ENCODE measurements at regions of chr14 and their contacts with region 1.

Region 1: GRCh38 chr14:99266181-99267178 is 5.5 kb downstream of the BCL11B start:
- DNase-seq: peak; percentile 79 to 93 (median 89)
- ATAC-seq: peak; percentile 56
- H3K4me3 ChIP-seq: peak overlapping the region; percentile 90
- H3K4me3 Mint-ChIP-seq: peak overlapping the region; percentile 92 to 100 (median 94)
- H3K27ac ChIP-seq: peak overlapping the region; percentile 98
- H3K27ac Mint-ChIP-seq: peak overlapping the region; percentile 99 to 100 (median 100)
- H3K4me1 ChIP-seq: peaks cover 16 to 39% of the 10 kb centered on the region in 2 donors
- H3K4me1 Mint-ChIP-seq: peaks cover 43 to 66% (median 54%) of the 10 kb centered on the region in 7 donors
- H3K27me3 ChIP-seq: no peaks in the 10 kb centered on the region
- H3K27me3 Mint-ChIP-seq: peaks cover 0 to 10% (median 0%) of the 10 kb centered on the region in 5 donors

Region 2: GRCh38 chr14:98173305-98173704 is 1093.2 kb before region 1 on chr14:
- CTCF ChIA-PET with region 1: no interaction called
- POLR2A ChIA-PET with region 1: interaction called, 15 read pairs
- intact Hi-C with region 1: no loop called
- DNase-seq: peak in 7 of 9 donors; percentile 71 to 84 (median 82)
- ATAC-seq: peak; percentile 78
- H3K4me3 ChIP-seq: peak overlapping the region; percentile 33
- H3K4me3 Mint-ChIP-seq: peak overlapping the region; percentile 74 to 90 (median 84)
- H3K27ac ChIP-seq: peak overlapping the region; percentile 81
- H3K27ac Mint-ChIP-seq: peak overlapping the region; percentile 89 to 100 (median 97)
- H3K4me1 ChIP-seq: peaks cover 100% of the 10 kb centered on the region in 2 donors
- H3K4me1 Mint-ChIP-seq: peaks cover 59 to 100% (median 99%) of the 10 kb centered on the region in 7 donors
- H3K27me3 ChIP-seq: no peaks in the 10 kb centered on the region
- H3K27me3 Mint-ChIP-seq: no peaks in the 10 kb centered on the region

Region 3: DNA sequence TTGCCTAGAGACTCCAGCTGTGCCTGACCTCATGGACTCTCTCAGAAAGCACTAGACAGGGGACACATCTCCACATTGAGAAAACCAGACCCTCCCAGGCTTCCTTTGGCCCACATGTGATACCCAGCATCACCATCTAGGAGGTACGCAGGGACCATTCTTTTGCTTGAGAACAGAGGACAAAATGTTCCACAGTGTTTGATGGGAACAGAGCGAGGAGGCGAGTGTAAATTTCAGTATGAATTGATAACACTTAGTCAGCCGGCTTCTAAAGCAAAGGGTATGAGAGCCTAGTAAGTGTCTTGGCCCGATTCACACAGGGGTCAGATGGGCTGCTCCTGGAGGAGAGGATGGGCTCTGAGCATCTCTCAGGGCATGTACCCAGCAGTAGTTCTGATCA is 1046.8 kb before region 1 on chr14:
- CTCF ChIA-PET with region 1: interaction called, 4 read pairs
- POLR2A ChIA-PET with region 1: interaction called, 10 read pairs
- intact Hi-C with region 1: no loop called
- DNase-seq: no peak
- ATAC-seq: no peak
- H3K4me3 ChIP-seq: no peak overlapping the region
- H3K4me3 Mint-ChIP-seq: peak overlapping the region in 4 of 10 donors; percentile 2 to 49 (median 33)
- H3K27ac ChIP-seq: no peak overlapping the region
- H3K27ac Mint-ChIP-seq: peak overlapping the region in 4 of 9 donors; percentile 60 to 83 (median 71)
- H3K4me1 ChIP-seq: peaks cover 32 to 76% of the 10 kb centered on the region in 2 donors
- H3K4me1 Mint-ChIP-seq: peaks cover 26 to 49% (median 29%) of the 10 kb centered on the region in 7 donors
- H3K27me3 ChIP-seq: no peaks in the 10 kb centered on the region
- H3K27me3 Mint-ChIP-seq: no peaks in the 10 kb centered on the region

Region 4: DNA sequence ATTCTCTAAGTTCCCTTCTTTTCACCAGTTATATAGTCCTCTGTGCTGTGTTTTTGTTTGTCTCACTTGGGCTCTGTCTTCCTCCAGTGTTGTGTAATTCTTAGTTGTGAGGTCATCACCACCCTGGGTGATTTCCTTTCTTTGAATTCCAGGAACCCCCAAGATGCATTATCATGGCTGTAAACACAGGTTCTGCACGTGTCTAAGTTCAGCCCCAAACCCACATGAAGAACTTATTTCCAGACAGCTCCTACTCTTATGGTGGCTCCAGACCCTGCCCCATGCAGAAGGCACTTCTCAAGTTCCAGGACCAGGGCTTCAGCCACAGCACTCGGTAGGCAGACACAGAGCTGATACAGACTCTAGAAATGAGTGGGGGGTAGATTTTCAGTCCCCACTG is 555.0 kb before region 1 on chr14:
- CTCF ChIA-PET with region 1: no interaction called
- POLR2A ChIA-PET with region 1: no interaction called
- intact Hi-C with region 1: loop called (anchors 5 to 10 kb)
- DNase-seq: peak in 8 of 9 donors; percentile 3 to 44 (median 17)
- ATAC-seq: peak; percentile 65
- H3K4me3 ChIP-seq: no peak overlapping the region
- H3K4me3 Mint-ChIP-seq: peak overlapping the region in 5 of 10 donors; percentile 11 to 67 (median 16)
- H3K27ac ChIP-seq: no peak overlapping the region
- H3K27ac Mint-ChIP-seq: peak overlapping the region; percentile 10 to 91 (median 71)
- H3K4me1 ChIP-seq: peaks cover 0 to 11% of the 10 kb centered on the region in 2 donors
- H3K4me1 Mint-ChIP-seq: peaks cover 12 to 46% (median 27%) of the 10 kb centered on the region in 7 donors
- H3K27me3 ChIP-seq: no peaks in the 10 kb centered on the region
- H3K27me3 Mint-ChIP-seq: peaks cover 0 to 6% (median 0%) of the 10 kb centered on the region in 5 donors

Region 5: DNA sequence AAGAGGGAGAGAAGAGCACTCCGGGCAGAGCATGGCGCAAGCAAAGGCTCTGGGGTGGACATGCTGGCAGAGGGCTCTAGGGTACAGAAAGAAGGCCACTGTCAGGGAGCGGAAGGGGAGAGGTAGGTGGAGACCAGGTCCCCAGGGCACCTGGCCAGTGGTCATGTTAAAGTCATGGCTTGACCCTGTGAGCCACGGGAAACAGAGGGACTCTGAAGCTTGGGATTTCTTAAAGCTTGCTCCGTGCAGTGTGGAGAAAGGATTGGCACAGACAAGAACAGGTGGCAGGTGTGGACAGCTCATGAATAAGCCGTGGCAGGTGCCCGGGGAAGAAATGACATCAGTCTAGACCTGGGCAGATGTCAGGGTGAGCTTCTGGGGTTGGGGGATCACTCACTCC is 408.3 kb before region 1 on chr14:
- CTCF ChIA-PET with region 1: no interaction called
- POLR2A ChIA-PET with region 1: no interaction called
- intact Hi-C with region 1: no loop called
- DNase-seq: no peak
- ATAC-seq: no peak
- H3K4me3 ChIP-seq: no peak overlapping the region
- H3K4me3 Mint-ChIP-seq: no peak overlapping the region
- H3K27ac ChIP-seq: no peak overlapping the region
- H3K27ac Mint-ChIP-seq: peak overlapping the region in 1 of 9 donors; percentile 28
- H3K4me1 ChIP-seq: no peaks in the 10 kb centered on the region
- H3K4me1 Mint-ChIP-seq: peaks cover 0 to 14% (median 0%) of the 10 kb centered on the region in 7 donors
- H3K27me3 ChIP-seq: no peaks in the 10 kb centered on the region
- H3K27me3 Mint-ChIP-seq: peaks cover 0 to 19% (median 5%) of the 10 kb centered on the region in 5 donors

Region 6: DNA sequence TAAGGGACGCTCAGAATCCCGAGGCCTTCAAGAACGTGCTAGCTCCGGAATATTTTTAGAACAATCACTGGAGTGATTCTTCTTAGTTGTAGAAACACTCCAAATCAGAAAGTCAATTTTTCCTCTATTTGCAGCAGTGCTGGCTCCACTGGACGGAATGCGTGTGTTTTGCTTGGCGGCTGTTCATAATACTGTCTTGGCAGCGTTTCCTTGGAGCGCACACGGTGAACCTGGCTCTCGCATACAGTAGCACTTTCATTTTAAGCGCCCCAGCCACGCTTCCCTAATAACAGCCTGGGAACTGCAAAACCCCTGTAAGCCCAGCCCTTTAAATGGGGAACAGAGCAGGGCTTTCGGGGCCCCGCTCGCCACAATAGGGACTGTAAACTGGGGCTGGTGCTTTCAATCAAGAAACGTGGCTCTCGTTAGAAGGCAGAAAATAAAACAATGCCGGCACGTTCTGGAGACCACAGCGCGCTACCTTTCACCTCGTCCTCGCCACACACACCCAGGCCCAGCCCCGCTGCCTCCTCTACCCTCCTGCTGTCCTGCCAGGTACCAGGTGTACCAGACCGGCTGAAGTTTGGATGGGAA is 74.4 kb before region 1 on chr14:
- CTCF ChIA-PET with region 1: interaction called, 10 read pairs
- POLR2A ChIA-PET with region 1: interaction called, 396 read pairs
- intact Hi-C with region 1: loop called (anchors 1 kb)
- DNase-seq: peak in 3 of 9 donors; percentile 45 to 64 (median 49)
- ATAC-seq: peak; percentile 28
- H3K4me3 ChIP-seq: peak overlapping the region; percentile 61
- H3K4me3 Mint-ChIP-seq: peak overlapping the region; percentile 85 to 94 (median 90)
- H3K27ac ChIP-seq: peak overlapping the region; percentile 85
- H3K27ac Mint-ChIP-seq: peak overlapping the region; percentile 93 to 100 (median 98)
- H3K4me1 ChIP-seq: peaks cover 84 to 85% of the 10 kb centered on the region in 2 donors
- H3K4me1 Mint-ChIP-seq: peaks cover 55 to 97% (median 93%) of the 10 kb centered on the region in 7 donors
- H3K27me3 ChIP-seq: no peaks in the 10 kb centered on the region
- H3K27me3 Mint-ChIP-seq: no peaks in the 10 kb centered on the region

Region 7: DNA sequence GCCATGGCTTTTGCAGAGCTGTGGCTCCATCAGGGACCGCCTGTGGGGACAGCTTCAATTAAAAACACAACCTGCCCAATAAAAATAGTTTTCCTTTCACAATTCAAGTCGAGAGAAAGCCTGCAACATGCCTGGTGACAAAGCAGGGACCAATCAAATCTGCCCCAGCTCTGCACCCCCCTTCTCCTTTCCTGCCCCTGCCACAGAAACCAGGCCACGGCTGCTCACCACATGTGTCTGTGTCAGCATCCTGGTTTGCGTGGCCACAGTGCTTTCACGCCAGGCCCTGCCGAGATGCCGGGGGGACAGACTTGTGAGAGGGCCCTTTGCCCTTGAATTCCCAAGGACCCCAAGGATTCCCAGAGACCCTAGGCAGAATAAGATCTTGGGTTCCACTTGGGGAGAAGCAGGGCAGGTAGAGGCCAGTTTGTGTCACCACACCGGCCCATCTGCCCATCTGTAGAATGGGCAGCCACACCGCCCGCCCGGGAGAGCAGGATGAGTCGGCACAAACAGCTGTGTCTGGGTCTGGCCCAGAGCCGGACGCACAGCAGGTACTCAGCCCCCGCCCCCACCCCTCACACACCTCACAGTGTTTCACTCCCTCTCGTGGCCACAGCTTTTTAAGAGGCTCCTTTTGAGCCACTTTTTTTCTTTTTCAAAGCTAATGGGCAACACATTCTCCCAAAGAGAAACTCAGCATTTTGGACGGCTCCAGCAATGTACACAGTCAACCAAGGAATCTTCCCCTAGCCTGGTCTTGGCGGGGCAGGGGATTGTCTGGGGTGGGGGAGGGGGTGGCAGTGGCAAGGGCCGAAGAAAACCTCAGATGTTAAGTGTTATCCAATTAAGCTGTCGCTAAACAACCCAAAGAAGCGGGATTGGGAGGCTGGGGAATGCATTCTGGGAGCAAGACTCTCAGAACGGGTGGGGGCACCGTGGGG is 36.0 kb before region 1 on chr14:
- CTCF ChIA-PET with region 1: interaction called, 16 read pairs
- POLR2A ChIA-PET with region 1: interaction called, 1,374 read pairs
- intact Hi-C with region 1: loop called (anchors 1 kb)
- DNase-seq: peak; percentile 54 to 91 (median 84)
- ATAC-seq: peak; percentile 82
- H3K4me3 ChIP-seq: peak overlapping the region; percentile 27
- H3K4me3 Mint-ChIP-seq: peak overlapping the region; percentile 79 to 94 (median 86)
- H3K27ac ChIP-seq: peak overlapping the region; percentile 98
- H3K27ac Mint-ChIP-seq: peak overlapping the region; percentile 94 to 100 (median 99)
- H3K4me1 ChIP-seq: peaks cover 94 to 96% of the 10 kb centered on the region in 2 donors
- H3K4me1 Mint-ChIP-seq: peaks cover 65 to 96% (median 92%) of the 10 kb centered on the region in 7 donors
- H3K27me3 ChIP-seq: no peaks in the 10 kb centered on the region
- H3K27me3 Mint-ChIP-seq: no peaks in the 10 kb centered on the region

Region 8: DNA sequence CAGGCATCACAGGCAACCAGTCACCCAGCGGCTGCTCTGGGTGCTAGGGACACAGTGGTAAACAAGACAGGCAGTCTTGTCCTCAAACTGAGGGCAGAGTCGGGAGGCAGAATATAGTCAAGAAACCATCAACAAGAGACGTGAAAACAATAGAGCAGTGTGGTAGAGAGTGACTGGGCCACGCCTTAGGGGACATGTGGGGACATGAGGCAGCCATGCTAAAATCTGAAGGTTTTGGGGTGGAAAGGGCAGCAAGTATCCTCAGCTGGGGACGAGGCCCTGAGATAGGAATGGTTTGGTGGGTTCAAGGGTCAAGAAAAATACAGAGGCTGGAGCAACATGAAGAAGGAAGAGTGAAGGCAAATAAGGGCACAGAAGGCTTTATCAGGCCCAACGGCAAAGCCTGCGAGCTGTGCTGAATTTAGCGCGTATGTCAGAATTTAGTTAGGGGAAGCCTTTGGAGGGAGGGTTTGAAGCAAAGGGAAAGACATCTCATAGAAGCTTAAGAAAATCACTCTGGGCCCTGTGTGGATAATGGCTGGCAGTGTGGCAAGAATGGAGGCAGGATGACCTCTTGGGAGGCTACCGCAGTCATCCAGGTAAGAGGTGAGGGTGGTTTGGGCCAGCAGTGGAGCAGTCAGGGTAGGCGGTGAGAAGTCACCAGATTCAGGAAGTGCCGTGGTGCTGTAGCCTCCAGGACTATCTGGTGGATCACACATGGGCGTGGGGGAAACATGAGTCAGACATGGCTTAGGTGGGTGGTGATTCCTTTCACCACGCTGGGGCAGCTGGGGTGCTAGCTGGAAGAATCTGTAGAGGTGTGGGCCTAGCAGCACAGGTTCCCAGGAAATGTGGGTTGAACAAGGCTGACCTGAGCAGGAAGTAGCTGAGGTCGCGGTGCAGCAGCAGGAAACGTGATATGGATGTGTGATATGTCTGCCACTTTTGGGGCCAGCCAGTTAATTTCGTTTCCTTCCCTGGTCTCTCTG is 801.8 kb after region 1 on chr14:
- CTCF ChIA-PET with region 1: no interaction called
- POLR2A ChIA-PET with region 1: no interaction called
- intact Hi-C with region 1: loop called in 1 of 2 experiments (anchors 5 kb)
- DNase-seq: peak; percentile 56 to 92 (median 89)
- ATAC-seq: peak; percentile 74
- H3K4me3 ChIP-seq: peak overlapping the region; percentile 85
- H3K4me3 Mint-ChIP-seq: peak overlapping the region; percentile 92 to 99 (median 95)
- H3K27ac ChIP-seq: peak overlapping the region; percentile 98
- H3K27ac Mint-ChIP-seq: peak overlapping the region; percentile 96 to 100 (median 98)
- H3K4me1 ChIP-seq: peaks cover 42 to 60% of the 10 kb centered on the region in 2 donors
- H3K4me1 Mint-ChIP-seq: peaks cover 42 to 73% (median 61%) of the 10 kb centered on the region in 7 donors
- H3K27me3 ChIP-seq: no peaks in the 10 kb centered on the region
- H3K27me3 Mint-ChIP-seq: peaks cover 0 to 2% (median 0%) of the 10 kb centered on the region in 5 donors